Motor neuron (in vitro differentiated cells): ENCODE measurements at regions of chr17 and their contacts with region 1.

Region 1: DNA sequence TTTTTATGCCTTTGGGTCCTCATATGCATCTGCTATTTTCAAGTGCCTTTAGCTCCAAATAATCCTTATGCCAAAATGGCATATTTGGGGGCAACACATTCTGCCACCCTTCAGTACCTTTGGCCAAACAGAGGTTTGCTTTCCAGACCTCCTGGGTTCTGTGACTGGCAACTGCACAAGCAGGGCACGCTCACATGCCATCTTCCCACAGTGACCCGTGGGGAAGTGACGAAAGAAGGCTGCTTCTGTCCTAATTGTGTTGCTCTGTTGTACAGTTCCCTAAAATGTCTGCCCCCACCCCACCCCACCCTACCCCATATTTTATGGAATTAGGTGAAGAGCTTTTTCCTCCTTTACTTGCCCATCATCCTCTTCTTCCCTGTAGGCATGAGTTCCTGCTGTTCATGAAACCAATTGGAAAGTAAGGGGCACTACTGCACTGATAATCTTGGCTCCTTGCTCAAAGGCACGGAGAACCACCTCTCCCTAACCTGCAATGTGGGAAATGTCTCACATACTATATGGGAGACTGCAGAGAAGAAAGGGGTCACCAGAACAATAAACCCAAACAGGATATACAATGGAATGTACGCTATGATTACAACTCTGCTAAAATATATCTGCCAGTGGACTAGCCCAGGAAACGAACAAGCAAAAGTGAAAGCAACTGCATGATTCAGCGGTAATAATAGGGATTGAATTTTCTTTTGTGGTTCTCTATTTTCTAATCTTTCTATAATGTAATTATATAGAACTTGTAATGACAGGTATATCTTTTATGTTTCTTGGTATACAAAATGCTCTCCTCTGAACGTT is 3.3 kb upstream of the SLFN12L start:
- ATAC-seq: peak in 2 of 8 experiments; percentile 56 to 57
- H3K4me3 ChIP-seq: no peak overlapping the region
- H3K27ac ChIP-seq: no peak overlapping the region
- H3K4me1 ChIP-seq: no peaks in the 10 kb centered on the region

Region 2: DNA sequence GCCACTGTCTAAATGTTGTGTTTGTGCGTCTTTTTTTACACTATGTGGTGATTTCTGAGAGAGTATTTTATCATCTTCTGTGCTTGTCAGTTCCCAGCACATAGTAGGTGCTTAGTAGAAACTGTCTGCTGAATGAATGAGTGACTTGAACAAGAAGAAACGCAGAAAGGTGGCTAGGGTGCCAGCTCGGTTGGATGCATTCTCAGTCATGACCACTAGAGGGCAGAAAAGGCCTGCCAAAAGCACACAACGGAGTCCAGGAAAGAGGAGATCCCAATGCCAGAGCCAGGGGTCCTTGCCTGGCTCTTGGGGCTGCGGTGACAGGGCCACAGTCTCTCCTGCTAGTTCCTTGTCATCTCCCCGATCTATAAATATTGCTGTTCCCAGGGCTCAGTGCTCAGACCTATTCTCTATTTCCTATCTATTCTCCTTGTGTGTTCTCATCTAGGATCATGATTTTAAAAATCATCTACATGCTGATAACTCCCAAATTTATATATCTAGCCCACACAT is 1120.5 kb before region 1 on chr17:
- in situ Hi-C with region 1: loop called in 3 of 9 experiments (anchors 25 kb)
- ATAC-seq: peak; percentile 59 to 81 (median 74)
- H3K4me3 ChIP-seq: no peak overlapping the region
- H3K27ac ChIP-seq: no peak overlapping the region
- H3K4me1 ChIP-seq: peaks cover 0 to 8% of the 10 kb centered on the region in 2 donors

Region 3: DNA sequence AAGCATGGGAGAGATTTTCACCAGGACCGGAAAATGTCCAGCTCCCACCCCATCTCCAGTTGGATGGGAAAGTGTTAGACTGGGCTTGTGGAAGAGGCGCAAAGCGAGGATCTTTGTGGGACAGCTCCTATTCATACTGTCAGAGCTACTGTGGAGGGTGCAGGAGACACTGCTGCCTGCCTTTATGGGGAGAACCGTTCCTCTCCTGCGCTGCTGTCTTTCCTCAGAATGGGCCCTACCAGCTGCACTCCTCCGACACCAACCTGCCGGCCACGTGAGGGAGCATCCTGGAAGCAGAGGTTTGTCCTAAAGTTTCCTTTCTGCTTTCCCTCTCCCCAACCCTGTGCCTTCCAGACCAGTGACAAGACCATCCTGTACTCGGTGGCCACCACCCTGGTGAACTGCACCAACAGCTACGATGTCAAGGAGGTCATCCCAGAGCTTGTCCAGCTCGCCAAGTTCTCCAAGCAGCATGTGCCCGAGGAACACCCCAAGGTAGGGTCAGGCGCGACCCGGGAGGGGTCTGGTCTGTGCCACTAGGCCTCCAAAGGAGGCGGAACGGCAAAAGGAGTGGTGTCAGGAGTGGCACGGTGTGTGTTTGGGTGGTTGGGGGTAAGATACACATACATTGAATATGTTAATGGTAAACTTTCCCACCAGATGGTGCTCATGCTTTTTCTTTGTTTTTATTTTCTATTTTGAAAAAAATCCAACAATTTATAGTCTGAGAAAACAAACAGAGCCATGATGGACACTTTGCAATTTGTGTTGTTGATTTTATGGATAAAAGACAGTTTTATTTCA is 369.6 kb before region 1 on chr17:
- in situ Hi-C with region 1: loop called in 5 of 9 experiments (anchors 10 to 25 kb)
- ATAC-seq: peak in 3 of 8 experiments; percentile 57 to 83 (median 81)
- H3K4me3 ChIP-seq: no peak overlapping the region
- H3K27ac ChIP-seq: no peak overlapping the region
- H3K4me1 ChIP-seq: no peaks in the 10 kb centered on the region

Region 4: DNA sequence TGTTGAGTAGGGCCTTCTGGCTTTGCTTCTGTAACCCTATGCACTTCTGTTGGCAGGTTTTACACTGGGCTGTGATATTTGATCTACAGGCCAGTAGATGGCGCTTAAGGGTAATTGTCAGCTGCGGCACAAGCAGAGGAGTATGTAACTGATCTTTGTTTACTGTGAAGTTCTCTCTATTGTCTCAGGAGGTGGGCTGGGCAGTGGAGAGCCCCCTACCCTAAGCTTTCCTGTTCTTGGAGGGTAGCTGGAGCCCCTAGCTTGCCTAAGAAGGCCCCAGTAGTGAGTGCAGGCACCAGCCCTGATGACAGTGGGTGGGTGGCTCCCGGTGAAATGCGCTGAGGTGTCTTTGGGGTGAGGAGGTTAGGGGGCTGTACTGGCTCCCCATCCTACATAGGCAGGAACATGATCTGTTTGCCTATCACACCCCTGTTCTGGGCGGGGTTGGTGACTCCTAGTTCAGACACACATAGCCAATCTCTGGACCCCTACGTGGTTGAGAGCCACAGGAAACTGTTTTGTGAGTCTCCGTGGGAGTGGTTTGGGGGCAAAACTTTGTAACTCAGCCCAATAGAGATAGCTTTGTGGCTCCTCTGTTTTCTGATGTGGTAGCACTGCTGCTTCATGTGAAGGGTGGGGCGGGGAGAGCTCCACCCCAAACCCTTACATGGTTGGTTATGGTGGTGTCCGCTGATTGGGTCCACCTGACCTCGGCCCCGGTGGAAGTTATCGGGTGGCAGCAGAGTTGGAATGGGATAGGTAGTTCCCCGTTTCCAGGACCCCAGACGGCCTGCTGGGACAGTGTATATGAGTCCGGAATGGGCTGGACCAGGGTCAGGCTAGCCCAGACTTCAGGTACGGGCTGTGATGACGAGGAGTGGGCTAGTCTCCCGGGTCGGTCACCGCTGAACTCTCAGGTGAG is 227.7 kb before region 1 on chr17:
- in situ Hi-C with region 1: loop called in 7 of 9 experiments (anchors 5 to 25 kb)
- ATAC-seq: peak; percentile 69 to 95 (median 90)
- H3K4me3 ChIP-seq: no peak overlapping the region
- H3K27ac ChIP-seq: no peak overlapping the region
- H3K4me1 ChIP-seq: no peaks in the 10 kb centered on the region